ENCODE measurements at regions of chr9 and their contacts with region 1.

Region 1: DNA sequence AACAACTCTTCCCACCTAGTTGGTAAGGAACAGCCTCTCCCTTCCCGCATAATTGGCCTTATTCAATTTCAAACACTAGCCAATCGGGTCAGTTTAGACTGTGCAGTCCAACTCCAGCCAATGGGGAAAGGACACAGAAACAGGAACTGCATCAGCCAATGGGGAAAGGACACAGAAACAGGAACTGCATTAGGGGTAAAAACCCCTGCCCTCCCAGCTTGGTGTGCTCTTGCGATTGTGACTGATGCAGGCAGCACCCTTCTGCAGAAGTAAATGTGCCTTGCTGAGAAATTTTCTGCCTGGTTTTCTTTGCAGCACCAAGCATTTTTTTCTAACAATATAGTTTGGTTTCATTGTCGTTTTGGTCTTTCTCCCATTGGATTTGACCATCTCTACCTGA is 8.5 kb upstream of the GLT6D1 start:
- DNase-seq: no peak
- H3K4me3 ChIP-seq: peak overlapping the region in 2 of 4 experiments; percentile 36 to 58; a peak in 4 of 8 replicates
- H3K27ac ChIP-seq: peak overlapping the region; percentile 59; the same call in 1 of the 2 replicates
- H3K4me1 ChIP-seq: peaks cover 4 to 20% (median 7%) of the 10 kb centered on the region in 4 experiments; a peak in 6 of 7 replicates
- H3K27me3 ChIP-seq: no peaks in the 10 kb centered on the region
- CTCF ChIP-seq: no peak
- EP300 ChIP-seq: no peak
- POLR2A ChIP-seq: no peak; a peak in 1 of 3 replicates
- RAD21 ChIP-seq: no peak

Region 2: DNA sequence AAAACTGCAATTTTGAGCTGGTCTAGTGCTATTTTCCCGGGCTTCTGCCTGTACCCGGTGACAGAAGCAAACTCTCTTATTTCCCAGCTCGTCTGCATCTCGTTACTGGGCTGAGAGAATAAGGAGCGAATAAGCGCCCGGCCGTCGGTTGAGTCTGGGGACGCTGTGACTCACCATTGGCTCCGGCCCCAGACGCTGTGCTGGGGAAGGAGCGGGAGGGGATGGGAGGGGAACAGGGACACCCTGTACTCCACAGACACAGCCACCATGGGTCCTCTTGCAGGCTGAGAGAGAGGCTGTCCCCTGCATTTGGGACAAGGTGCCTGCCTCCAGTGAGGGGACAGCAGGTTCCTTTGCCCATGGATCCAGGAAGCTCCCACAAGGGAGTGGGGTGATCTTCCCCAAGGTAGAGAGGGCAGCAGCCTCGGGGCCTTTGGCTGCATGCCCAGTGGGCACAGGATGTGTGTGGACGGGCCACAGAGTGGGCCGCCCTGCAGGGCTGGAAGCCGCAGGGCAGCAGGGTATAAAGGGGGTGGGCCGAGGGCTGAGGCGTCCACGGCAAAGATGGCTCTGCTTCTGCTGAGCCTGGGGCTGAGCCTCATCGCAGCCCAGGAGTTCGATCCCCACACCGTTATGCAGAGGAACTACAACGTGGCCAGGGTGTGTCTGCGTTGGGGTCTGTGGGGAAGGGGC is 15.0 kb after region 1 on chr9 and contains the start of gene LCN9:
- CTCF ChIA-PET with region 1: interaction called, 3 read pairs
- POLR2A ChIA-PET with region 1: interaction called, 19 read pairs
- DNase-seq: peak in 1 of 2 experiments; percentile 43
- H3K4me3 ChIP-seq: no peak within 1 kb of the TSS
- H3K27ac ChIP-seq: no peak within 1 kb of the TSS
- H3K4me1 ChIP-seq: peaks cover 0 to 8% (median 4%) of the 10 kb centered on the region in 4 experiments; a peak in 3 of 7 replicates
- H3K27me3 ChIP-seq: no peaks in the 10 kb centered on the region; a peak in 1 of 7 replicates
- CTCF ChIP-seq: no peak
- EP300 ChIP-seq: no peak
- POLR2A ChIP-seq: no peak
- RAD21 ChIP-seq: no peak
- total RNA-seq, gene LCN9: 3.1 and 3.7 TPM in 2 replicates

Region 3: GRCh38 chr9:135701959-135702721 is 54.3 kb after region 1 on chr9 and contains the start of gene KCNT1:
- CTCF ChIA-PET with region 1: no interaction called
- POLR2A ChIA-PET with region 1: no interaction called
- DNase-seq: peak in 1 of 2 experiments; percentile 96
- H3K4me3 ChIP-seq: peak within 1 kb of the TSS; percentile 30 to 62 (median 34); a peak in 6 of 8 replicates
- H3K27ac ChIP-seq: no peak within 1 kb of the TSS
- H3K4me1 ChIP-seq: peaks cover 0 to 15% (median under 1%) of the 10 kb centered on the region in 4 experiments; a peak in 2 of 7 replicates
- H3K27me3 ChIP-seq: peaks cover 0 to 14% (median 4%) of the 10 kb centered on the region in 4 experiments; a peak in 4 of 7 replicates
- CTCF ChIP-seq: peak in 2 of 3 experiments; percentile 77 to 85; a peak in 3 of 4 replicates
- EP300 ChIP-seq: no peak
- POLR2A ChIP-seq: no peak
- RAD21 ChIP-seq: peak; percentile 52 to 74
- total RNA-seq, gene KCNT1: 0.13 and 0.44 TPM in 2 replicates

Measured in H1 (cell line).